HEK293 (cell line): ENCODE measurements at regions of chr16 and their contacts with region 1.

Region 1: GRCh38 chr16:84754353-84754856 is 54.6 kb downstream of the USP10 start:
- H3K4me3 ChIP-seq: no peak overlapping the region
- H3K27ac ChIP-seq: no peak overlapping the region
- H3K4me1 ChIP-seq: peaks cover 4% of the 10 kb centered on the region; the same call in 1 of the 2 replicates
- CTCF ChIP-seq: peak; percentile 76

Region 2: GRCh38 chr16:84617791-84618580 is 136.4 kb before region 1 on chr16 and contains the start of gene COTL1:
- CTCF ChIA-PET with region 1: interaction called, 10 read pairs
- POLR2A ChIA-PET with region 1: interaction called, 6 read pairs
- H3K4me3 ChIP-seq: peak within 1 kb of the TSS; percentile 47
- H3K27ac ChIP-seq: no peak within 1 kb of the TSS; the same call in 1 of the 2 replicates
- H3K4me1 ChIP-seq: peaks cover 4% of the 10 kb centered on the region; the same call in 1 of the 2 replicates
- CTCF ChIP-seq: no peak; the same call in 1 of the 2 replicates

Region 3: GRCh38 chr16:84738255-84739038 is 16.0 kb before region 1 on chr16:
- CTCF ChIA-PET with region 1: interaction called, 111 read pairs
- POLR2A ChIA-PET with region 1: no interaction called
- H3K4me3 ChIP-seq: no peak overlapping the region
- H3K27ac ChIP-seq: no peak overlapping the region
- H3K4me1 ChIP-seq: peaks cover 10% of the 10 kb centered on the region
- CTCF ChIP-seq: peak; percentile 73

Region 4: GRCh38 chr16:84773312-84773711 is 18.9 kb after region 1 on chr16:
- CTCF ChIA-PET with region 1: interaction called, 23 read pairs
- POLR2A ChIA-PET with region 1: no interaction called
- H3K4me3 ChIP-seq: no peak overlapping the region
- H3K27ac ChIP-seq: no peak overlapping the region
- H3K4me1 ChIP-seq: no peaks in the 10 kb centered on the region
- CTCF ChIP-seq: no peak

Region 5: DNA sequence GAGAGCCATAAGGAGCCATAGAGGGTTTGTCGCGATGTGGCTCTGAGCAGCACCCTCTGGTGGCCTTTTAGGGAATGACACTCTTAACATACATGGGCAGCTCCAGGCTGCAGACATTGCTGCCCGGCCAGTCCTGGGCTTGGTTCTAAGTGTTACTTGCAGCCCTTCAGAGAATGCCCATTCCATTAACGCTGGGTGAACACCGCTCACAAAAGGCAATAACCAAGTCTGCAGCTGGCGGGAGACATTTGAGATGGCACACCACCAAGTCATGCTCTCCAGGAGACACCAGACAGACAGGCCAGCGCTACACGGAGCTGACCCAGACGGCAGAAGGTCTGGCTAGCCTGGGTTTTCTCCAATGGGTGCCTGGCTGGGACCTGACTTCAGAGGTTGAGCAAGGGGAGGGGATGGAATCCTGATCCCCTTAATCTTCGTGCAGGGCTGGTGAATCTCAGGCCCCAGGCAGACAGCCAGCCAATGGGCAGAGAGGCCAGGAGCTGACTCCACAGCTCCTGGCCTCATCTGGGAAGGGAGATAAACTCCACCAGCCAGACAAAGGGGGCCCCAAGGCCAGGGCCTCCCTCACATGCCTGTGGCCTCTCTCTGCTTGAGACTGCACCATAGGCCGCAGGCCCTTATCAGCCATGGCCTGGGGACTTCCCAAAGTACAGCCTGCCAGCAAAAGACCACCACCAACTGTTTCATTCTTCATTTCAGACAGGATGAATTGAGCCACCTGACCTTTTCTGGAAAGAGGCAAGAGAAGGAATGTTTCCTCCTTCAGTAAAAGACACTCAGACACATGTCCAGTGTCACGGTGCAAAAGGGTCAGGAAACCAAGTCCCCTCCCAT is 198.2 kb after region 1 on chr16:
- CTCF ChIA-PET with region 1: interaction called, 119 read pairs
- POLR2A ChIA-PET with region 1: no interaction called
- H3K4me3 ChIP-seq: no peak overlapping the region
- H3K27ac ChIP-seq: no peak overlapping the region
- H3K4me1 ChIP-seq: no peaks in the 10 kb centered on the region
- CTCF ChIP-seq: peak; percentile 75

Region 6: GRCh38 chr16:84970447-84971127 is 216.2 kb after region 1 on chr16:
- CTCF ChIA-PET with region 1: interaction called, 144 read pairs
- POLR2A ChIA-PET with region 1: no interaction called
- H3K4me3 ChIP-seq: no peak overlapping the region
- H3K27ac ChIP-seq: no peak overlapping the region
- H3K4me1 ChIP-seq: no peaks in the 10 kb centered on the region
- CTCF ChIP-seq: peak; percentile 94